ENCODE measurements at regions of chr1 and their contacts with region 1.

Region 1: DNA sequence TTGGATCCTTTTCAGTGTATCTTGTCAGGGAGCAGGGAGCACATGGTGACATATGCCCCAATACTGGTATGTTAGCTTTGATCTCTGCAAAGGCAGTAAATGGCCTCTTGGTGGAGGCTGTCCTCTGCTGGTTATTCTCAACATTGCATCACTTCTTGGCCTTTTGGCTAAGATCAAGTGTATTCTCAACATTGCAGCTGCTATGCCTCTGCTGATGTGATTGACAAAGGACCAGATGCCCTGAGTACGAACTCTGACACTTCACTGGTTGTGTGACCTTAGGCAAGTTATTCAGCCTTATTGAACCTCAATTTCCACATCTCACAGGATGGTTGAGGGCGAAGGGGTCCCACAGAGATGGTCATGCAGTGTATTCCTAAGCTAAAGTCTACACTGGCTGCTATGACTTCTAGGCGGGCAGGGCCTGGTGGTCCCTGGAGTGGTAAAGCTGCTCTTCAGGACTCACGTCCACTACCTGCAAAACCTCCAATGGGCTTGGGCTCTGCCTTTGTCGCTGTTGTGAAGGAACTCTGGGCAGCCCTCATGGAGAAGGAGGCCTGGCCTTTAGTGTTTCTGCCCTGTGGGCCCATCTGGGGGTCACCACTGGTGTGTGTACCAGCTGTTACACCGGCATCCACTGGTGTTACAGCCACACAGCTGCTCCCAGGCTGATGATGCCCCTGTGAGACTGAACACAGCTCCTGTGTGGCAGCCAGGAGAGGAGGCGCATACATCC is 64.8 kb downstream of the DNTTIP2 start:
- DNase-seq: peak; percentile 74
- H3K4me3 ChIP-seq: no peak overlapping the region
- H3K27ac ChIP-seq: no peak overlapping the region
- H3K4me1 ChIP-seq: peaks cover 0 to 20% (median 16%) of the 10 kb centered on the region in 4 donors
- H3K27me3 ChIP-seq: no peaks in the 10 kb centered on the region
- CTCF ChIP-seq: peak; percentile 92 to 97 (median 96)
- EP300 ChIP-seq: no peak
- POLR2A ChIP-seq: no peak

Region 2: GRCh38 chr1:93346421-93346991 is 467.7 kb before region 1 on chr1:
- intact Hi-C with region 1: no loop called
- DNase-seq: no peak
- H3K4me3 ChIP-seq: peak overlapping the region; percentile 91 to 99 (median 96)
- H3K27ac ChIP-seq: peak overlapping the region; percentile 94 to 98 (median 96)
- H3K4me1 ChIP-seq: peaks cover 0 to 69% (median 31%) of the 10 kb centered on the region in 4 donors
- H3K27me3 ChIP-seq: no peaks in the 10 kb centered on the region
- CTCF ChIP-seq: no peak
- EP300 ChIP-seq: no peak
- POLR2A ChIP-seq: no peak

Region 3: DNA sequence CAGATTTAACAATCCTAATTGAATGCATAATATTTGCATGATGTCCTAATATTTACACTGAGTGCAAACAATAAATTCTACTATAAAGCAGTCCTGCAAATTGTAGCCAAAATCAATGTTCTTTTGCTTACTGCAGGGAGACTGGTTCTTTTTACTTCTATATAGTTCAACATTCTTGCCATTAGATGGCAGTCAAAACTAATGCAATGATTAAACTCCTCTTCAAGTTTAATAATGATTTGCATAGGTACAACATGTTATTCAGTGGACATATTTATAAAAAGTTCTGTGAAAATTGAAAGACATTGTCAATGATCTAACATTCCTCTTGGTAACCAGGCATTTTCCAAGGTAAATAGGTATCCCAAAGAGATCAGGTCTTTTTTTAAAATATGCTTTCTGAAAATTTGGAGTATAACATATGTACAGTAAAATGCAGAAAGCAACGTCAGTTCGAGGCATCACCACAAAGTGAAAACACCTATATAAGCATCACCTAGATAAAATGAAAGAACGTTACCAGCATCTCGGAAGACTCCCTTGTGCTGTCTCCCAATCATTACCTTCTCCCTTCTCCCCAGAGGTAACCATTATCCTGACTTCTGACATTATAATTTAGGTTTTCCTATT is 376.1 kb before region 1 on chr1:
- intact Hi-C with region 1: loop called (anchors 2 kb)
- DNase-seq: no peak
- H3K4me3 ChIP-seq: no peak overlapping the region
- H3K27ac ChIP-seq: no peak overlapping the region
- H3K4me1 ChIP-seq: no peaks in the 10 kb centered on the region
- H3K27me3 ChIP-seq: no peaks in the 10 kb centered on the region
- CTCF ChIP-seq: peak; percentile 20 to 70 (median 50)
- EP300 ChIP-seq: no peak
- POLR2A ChIP-seq: no peak

Region 4: DNA sequence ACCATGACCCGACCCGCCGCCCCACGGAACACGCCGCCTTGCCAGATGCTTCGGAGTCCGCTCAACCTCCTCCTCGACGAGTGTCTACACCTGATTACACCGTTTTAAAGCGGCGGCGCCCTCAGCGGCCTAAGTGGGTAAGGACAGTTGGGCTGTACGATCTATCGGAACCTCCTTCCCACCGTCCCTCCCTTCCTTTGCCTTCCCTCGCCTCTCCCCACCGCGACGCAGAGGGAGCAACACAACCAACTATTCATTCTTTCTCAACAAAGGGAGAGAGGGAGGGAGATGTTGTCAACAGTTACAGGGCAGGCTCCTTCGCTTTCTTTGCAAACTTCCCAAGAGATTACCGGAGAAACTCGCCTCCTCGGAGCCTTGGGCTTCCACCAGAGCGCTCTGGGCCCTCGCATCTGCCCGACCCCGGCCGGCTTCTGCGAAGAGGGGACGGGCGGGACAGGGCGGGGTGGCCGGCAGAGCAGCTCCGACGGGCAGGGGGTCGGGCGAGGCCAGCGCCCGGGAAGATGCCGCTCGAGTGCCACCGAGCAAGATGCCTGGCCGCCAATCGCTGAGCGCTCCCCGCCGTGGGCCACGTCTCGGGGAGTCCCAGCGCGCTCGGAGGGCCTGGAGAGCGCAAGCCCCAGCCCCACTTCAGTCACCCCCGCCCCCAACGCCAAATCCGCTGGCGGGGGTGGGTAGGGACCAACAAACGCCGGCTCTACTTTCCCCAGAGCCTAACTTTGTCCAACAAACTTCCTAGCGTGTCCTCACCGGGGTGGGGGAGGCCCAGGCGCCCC is 133.3 kb before region 1 on chr1:
- intact Hi-C with region 1: loop called (anchors 2 kb)
- DNase-seq: peak; percentile 91
- H3K4me3 ChIP-seq: peak overlapping the region; percentile 81 to 90 (median 88)
- H3K27ac ChIP-seq: peak overlapping the region; percentile 80 to 93 (median 90)
- H3K4me1 ChIP-seq: peaks cover 0 to 30% (median 11%) of the 10 kb centered on the region in 4 donors
- H3K27me3 ChIP-seq: no peaks in the 10 kb centered on the region
- CTCF ChIP-seq: peak; percentile 25 to 78 (median 68)
- EP300 ChIP-seq: no peak
- POLR2A ChIP-seq: peak in 1 of 2 donors; percentile 19

Region 5: GRCh38 chr1:93692983-93693591 is 121.1 kb before region 1 on chr1:
- intact Hi-C with region 1: no loop called
- DNase-seq: no peak
- H3K4me3 ChIP-seq: no peak overlapping the region
- H3K27ac ChIP-seq: peak overlapping the region; percentile 20 to 60 (median 42)
- H3K4me1 ChIP-seq: peaks cover 0 to 21% (median 18%) of the 10 kb centered on the region in 4 donors
- H3K27me3 ChIP-seq: no peaks in the 10 kb centered on the region
- CTCF ChIP-seq: no peak
- EP300 ChIP-seq: no peak
- POLR2A ChIP-seq: no peak

Region 6: GRCh38 chr1:93779540-93780192 is 34.6 kb before region 1 on chr1:
- intact Hi-C with region 1: no loop called
- DNase-seq: no peak
- H3K4me3 ChIP-seq: no peak overlapping the region
- H3K27ac ChIP-seq: no peak overlapping the region
- H3K4me1 ChIP-seq: no peaks in the 10 kb centered on the region
- H3K27me3 ChIP-seq: no peaks in the 10 kb centered on the region
- CTCF ChIP-seq: no peak
- EP300 ChIP-seq: no peak
- POLR2A ChIP-seq: no peak

Region 7: GRCh38 chr1:93828367-93828755 is 14.1 kb after region 1 on chr1:
- intact Hi-C with region 1: no loop called
- DNase-seq: no peak
- H3K4me3 ChIP-seq: no peak overlapping the region
- H3K27ac ChIP-seq: no peak overlapping the region
- H3K4me1 ChIP-seq: no peaks in the 10 kb centered on the region
- H3K27me3 ChIP-seq: no peaks in the 10 kb centered on the region
- CTCF ChIP-seq: no peak
- EP300 ChIP-seq: no peak
- POLR2A ChIP-seq: no peak

Measured in sigmoid colon (tissue), 7 donors.